Mucosa of descending colon (tissue), 3 donors: ENCODE measurements at regions of chr10 and their contacts with region 1.

Region 1: DNA sequence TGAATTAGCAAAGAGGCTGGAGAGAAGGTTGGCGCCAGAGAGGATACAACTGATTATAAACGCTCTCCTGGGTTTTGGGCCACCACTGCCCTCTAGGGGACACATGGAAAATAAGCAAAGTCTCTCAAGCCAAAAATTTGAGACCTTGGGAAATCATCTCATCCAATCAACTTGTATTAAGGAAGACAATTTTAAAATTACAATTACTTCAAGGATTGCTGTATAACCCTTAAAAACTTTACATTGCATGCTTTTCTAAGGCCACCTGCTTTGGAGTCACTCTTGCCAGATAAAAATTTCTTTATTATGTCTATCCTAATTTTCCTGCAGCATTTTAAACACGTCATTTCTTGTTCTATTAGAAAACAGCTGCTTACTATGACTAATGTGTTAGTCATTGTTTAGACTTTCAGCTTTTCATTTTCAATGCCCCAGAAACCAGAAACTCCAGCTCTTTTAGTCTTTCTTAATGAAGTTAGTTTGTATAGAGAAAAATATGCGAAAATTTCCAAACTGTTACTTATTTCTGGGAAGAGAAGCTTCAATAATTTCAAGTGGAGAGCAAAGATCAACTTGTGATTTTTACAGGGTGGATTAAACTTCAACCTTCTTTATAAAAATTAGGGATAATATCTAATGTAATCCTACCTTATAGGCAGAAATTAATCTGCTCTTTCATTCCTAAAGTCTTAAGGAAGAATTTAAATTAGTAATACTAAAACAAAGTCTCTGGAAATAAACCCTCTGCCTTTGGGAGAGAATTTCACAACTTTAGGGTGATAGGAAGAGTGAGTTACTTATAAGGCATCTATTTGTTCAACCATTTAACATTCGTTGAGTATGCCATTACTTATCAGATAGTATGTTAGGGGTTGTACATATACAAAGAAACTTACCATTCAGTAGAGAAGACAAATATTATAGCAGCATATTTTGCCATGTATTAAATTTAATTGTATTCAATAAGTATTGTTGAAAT is 20.6 kb upstream of the RHOBTB1 start:
- DNase-seq: peak in 2 of 3 donors; percentile 55 to 65
- ATAC-seq: peak; percentile 86
- H3K4me3 ChIP-seq: no peak overlapping the region
- H3K4me1 ChIP-seq: no peaks in the 10 kb centered on the region
- CTCF ChIP-seq: peak; percentile 56

Region 2: GRCh38 chr10:60646966-60647796 is 317.4 kb before region 1 on chr10:
- intact Hi-C with region 1: no loop called
- DNase-seq: peak in 1 of 3 donors; percentile 78
- ATAC-seq: peak; percentile 66
- H3K4me3 ChIP-seq: no peak overlapping the region
- H3K4me1 ChIP-seq: no peaks in the 10 kb centered on the region
- CTCF ChIP-seq: no peak

Region 3: DNA sequence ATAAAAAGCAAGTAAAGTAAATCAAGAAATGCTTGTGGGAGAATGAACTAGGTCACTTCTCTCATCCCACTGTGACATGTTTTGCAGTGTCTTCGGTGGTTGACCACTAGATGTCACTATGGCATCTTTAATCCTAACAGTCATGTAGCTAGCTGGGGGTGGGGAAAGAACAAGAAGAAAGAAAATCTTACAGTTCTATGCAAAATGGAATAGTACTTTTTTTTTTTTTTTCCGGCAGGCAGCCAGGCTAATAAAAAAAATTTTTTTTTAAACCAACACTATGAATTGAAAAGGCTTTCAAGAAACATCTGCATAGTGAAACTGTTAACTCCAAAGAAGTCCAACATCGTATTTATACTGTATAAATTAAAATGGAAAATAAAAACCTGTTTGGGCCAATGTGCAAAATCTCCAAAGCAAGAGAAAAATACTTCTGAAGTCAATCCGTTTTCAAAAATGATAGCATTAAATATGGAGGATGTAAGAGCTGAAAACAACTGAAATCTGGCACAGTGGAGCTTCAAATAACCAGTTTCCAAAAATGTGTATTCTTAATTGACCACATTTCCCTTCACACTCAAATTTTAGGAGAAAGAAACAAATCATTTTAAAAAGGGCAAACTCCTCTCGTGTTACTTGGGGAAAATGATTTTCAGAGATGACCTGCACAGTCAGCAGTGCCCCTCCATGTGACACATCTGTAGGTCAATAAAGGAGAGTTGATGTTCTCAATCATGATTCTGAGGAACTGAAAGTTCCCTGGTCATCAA is 147.7 kb before region 1 on chr10:
- intact Hi-C with region 1: loop called (anchors 5 kb)
- DNase-seq: peak in 1 of 3 donors; percentile 70
- ATAC-seq: peak; percentile 87
- H3K4me3 ChIP-seq: no peak overlapping the region
- H3K4me1 ChIP-seq: no peaks in the 10 kb centered on the region
- CTCF ChIP-seq: peak; percentile 34

Region 4: GRCh38 chr10:60883187-60883586 is 81.4 kb before region 1 on chr10:
- intact Hi-C with region 1: loop called in 1 of 2 experiments (anchors 10 kb)
- DNase-seq: peak in 1 of 3 donors; percentile 58
- ATAC-seq: peak; percentile 79
- H3K4me3 ChIP-seq: no peak overlapping the region
- H3K4me1 ChIP-seq: no peaks in the 10 kb centered on the region
- CTCF ChIP-seq: peak; percentile 19

Region 5: GRCh38 chr10:61284222-61284890 is 319.8 kb after region 1 on chr10:
- intact Hi-C with region 1: loop called in 1 of 2 experiments (anchors 10 kb)
- DNase-seq: peak in 1 of 3 donors; percentile 35
- ATAC-seq: peak; percentile 46
- H3K4me3 ChIP-seq: no peak overlapping the region
- H3K4me1 ChIP-seq: no peaks in the 10 kb centered on the region
- CTCF ChIP-seq: no peak